ENCODE measurements at regions of chr1 and their contacts with region 1.

Region 1: DNA sequence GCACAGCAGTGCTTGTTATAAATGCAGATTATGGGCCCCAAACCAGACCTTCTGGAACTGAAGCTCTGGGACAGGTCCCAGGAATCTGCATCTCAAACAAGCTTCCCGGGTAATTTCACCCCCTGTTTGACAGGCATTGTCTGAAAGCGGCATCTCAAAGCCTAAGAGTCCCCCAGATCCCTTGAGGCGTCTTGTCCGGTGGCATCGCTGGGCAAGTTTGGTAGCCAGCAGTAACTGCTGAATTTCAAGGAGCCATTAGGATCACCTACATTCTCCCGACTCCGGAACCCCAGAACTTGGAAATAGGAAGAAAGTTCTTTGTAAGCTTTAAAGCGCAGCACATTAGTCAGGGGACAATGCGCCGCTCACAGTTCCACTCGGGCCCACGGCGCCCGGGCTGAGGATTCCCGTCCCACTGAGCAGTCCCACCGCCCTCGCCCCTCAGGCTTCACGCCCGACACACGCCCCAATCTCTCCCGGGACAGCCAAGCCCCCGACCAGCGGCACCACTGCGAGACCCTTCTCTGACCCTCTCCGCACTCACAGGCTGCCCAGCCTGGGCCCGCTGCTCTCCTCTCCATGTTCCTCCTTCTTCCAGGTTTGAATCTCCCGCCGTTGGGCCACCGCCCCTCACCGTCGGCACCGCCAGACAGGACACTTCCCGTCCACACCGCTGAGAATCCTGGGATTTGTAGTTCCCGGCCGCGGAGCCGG is at the start of gene IQGAP3:
- DNase-seq: peak; percentile 77
- H3K4me3 ChIP-seq: peak within 1 kb of the TSS; percentile 89
- H3K27ac ChIP-seq: no peak within 1 kb of the TSS
- H3K27me3 ChIP-seq: no peaks in the 10 kb centered on the region
- CTCF ChIP-seq: no peak

Region 2: DNA sequence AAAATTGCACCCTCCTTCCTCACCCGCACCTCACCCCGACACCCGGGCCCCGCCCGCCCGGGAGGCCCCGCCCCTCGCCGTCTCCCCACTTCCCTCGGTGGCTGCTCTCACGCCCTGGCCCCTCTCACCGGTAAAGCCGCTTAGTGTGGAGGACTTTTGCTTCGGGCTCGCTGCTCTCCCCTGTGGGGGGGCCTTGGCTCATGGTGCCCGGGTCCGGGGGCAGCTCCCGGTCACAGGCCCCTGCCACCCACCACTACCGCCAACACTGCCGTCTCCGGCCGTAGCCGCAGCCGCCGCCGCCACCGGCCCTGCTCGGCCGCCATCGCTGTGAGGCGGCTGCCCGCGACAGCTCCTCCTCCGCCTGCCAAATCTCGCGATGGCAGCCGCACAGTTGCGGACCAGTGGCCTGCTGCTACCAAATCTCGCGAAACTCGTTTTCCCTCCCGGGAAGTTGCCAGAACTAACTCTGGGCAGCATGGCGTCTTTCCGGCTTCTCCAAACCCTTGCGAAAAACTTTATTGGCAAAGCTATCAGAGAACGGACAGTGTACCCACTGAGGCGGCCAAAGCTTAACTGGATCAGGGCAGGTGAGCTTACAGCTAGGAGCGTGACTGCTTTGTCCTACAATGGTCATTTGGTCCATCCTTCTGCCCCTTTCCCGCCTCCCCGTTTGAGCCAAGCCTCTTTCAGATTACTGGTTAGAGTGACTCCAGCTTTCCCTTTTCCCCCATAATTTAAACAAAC is 289.5 kb before region 1 on chr1 and contains the start of gene SMG5:
- in situ Hi-C with region 1: no loop called
- DNase-seq: peak; percentile 97
- H3K4me3 ChIP-seq: peak within 1 kb of the TSS; percentile 88
- H3K27ac ChIP-seq: peak within 1 kb of the TSS; percentile 97
- H3K27me3 ChIP-seq: no peaks in the 10 kb centered on the region
- CTCF ChIP-seq: no peak

Region 3: DNA sequence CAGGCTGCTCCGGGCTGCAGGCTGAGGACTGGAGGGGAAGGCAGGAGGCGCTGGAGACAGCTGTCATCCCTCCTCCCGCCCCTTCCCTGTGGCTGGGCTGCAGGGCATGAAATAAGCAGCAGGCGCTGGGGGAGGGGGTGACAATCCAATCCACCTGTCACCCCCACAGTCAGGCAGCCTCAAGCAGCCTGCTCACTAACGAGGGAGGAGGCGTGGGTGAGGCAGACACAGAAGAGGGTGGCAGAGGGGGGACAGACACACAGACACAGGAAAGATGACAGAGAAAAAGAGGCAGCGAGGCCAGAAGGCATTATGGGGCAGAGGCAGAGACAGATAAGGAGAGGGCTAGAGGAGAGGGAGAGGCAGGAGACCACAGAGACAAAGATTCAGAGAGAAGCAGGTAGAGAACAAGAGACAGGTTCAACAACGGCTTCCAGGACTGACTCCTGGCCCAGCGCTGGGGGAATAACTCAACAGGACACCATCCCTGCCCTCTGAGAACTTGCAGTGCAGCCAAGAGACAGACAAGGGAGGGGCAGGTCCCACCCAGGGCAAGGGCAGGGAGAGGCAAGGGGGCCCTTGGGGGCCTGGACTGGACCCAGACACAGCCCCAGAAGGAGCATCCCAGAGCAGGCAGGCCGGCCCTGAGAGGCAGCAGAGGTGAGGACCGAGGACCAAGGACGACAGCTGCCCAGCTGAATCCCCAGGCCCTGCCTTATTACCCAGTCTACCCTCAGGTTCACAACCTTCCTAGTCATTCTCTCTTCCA is 82.8 kb before region 1 on chr1:
- in situ Hi-C with region 1: no loop called
- DNase-seq: no peak
- H3K4me3 ChIP-seq: no peak overlapping the region
- H3K27ac ChIP-seq: no peak overlapping the region
- H3K27me3 ChIP-seq: no peaks in the 10 kb centered on the region
- CTCF ChIP-seq: peak; percentile 41

Region 4: DNA sequence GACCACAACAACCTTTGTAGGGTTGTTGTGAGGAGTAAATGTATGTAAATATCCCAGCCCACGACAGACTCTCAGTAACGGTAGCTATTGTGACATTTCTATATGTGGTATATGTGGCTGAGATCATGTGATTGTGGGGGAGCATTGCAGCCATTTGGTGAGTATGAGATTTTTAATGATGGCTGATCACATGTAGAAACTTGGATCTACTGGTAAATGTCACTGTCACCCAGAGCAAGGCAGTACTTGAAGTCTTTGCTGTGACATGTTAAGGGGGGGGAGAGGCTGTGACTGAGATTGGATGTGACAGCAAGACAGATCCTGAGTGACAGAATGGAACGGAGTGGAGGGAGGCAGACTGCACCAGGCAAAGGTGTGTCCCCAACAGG is 47.6 kb before region 1 on chr1:
- in situ Hi-C with region 1: loop called (anchors 10 kb)
- DNase-seq: no peak
- H3K4me3 ChIP-seq: no peak overlapping the region
- H3K27ac ChIP-seq: no peak overlapping the region
- H3K27me3 ChIP-seq: no peaks in the 10 kb centered on the region
- CTCF ChIP-seq: no peak

Region 5: DNA sequence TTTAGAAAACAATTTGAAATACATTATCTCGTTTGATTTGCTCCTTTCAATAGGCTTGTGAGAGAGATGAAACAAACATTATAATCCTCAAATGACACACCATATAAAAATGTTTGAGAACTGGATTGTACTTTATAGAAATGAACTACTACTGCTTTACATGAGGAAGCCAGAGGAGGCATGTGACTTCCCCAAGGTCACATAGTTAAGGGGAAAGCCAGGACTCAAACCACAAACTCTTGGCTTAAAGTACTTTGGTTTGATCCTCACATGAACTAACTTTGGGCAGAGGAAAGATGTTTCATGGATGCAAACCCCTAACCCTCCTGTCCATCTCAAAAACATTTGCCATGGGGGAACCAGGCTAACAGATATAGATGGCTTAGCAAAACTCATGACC is 468.7 kb after region 1 on chr1:
- in situ Hi-C with region 1: no loop called
- DNase-seq: peak; percentile 63
- H3K4me3 ChIP-seq: no peak overlapping the region
- H3K27ac ChIP-seq: peak overlapping the region; percentile 45
- H3K27me3 ChIP-seq: no peaks in the 10 kb centered on the region
- CTCF ChIP-seq: no peak